PC-3 (cell line): ENCODE measurements at regions of chr9 and their contacts with region 1.

Region 1: DNA sequence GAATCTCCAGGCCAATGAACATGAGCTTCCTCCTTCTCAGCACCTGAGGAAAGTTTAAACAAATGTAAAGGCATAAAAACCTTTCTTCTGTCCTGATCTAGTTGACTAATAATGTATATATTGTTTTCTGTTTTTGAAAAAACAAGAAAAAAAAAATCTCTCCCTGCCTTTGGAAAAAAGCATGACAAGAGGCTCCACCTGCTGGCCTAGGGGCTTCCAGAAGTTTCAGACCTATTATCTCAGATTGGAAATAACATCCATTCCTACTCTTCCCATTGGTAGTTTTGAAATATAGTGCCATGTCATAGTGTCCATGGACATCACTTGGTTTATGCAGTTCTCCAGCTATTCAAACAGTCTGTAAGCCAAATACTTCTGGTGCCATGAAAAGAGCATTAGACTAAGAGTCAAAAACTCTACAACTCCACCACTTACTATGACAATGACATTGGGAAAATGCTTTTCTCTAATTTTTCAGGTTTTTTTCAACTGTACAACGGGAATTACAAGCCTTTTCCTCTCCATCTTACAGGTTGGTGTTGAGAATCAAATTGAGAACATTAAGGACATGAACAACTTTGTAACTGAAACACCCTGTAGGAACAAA is 409.6 kb upstream of the MPDZ start:
- DNase-seq: peak; percentile 32
- ATAC-seq: no peak
- H3K4me3 ChIP-seq: no peak overlapping the region
- H3K27ac ChIP-seq: peak overlapping the region; percentile 76
- H3K4me1 ChIP-seq: peaks cover 32% of the 10 kb centered on the region
- H3K27me3 ChIP-seq: no peaks in the 10 kb centered on the region
- CTCF ChIP-seq: peak; percentile 65

Region 2: GRCh38 chr9:13446938-13447842 is 241.9 kb before region 1 on chr9:
- CTCF ChIA-PET with region 1: interaction called, 3 read pairs
- POLR2A ChIA-PET with region 1: no interaction called
- intact Hi-C with region 1: loop called (anchors 5 kb)
- DNase-seq: no peak
- ATAC-seq: no peak
- H3K4me3 ChIP-seq: no peak overlapping the region
- H3K27ac ChIP-seq: no peak overlapping the region
- H3K4me1 ChIP-seq: no peaks in the 10 kb centered on the region
- H3K27me3 ChIP-seq: no peaks in the 10 kb centered on the region
- CTCF ChIP-seq: no peak; the same call in 1 of the 2 replicates

Region 3: GRCh38 chr9:13878241-13878711 is 189.2 kb after region 1 on chr9:
- CTCF ChIA-PET with region 1: no interaction called
- POLR2A ChIA-PET with region 1: no interaction called
- intact Hi-C with region 1: no loop called
- DNase-seq: no peak
- ATAC-seq: no peak
- H3K4me3 ChIP-seq: no peak overlapping the region
- H3K27ac ChIP-seq: no peak overlapping the region
- H3K4me1 ChIP-seq: peaks cover 5% of the 10 kb centered on the region; the same call in 1 of the 2 replicates
- H3K27me3 ChIP-seq: no peaks in the 10 kb centered on the region
- CTCF ChIP-seq: no peak

Region 4: DNA sequence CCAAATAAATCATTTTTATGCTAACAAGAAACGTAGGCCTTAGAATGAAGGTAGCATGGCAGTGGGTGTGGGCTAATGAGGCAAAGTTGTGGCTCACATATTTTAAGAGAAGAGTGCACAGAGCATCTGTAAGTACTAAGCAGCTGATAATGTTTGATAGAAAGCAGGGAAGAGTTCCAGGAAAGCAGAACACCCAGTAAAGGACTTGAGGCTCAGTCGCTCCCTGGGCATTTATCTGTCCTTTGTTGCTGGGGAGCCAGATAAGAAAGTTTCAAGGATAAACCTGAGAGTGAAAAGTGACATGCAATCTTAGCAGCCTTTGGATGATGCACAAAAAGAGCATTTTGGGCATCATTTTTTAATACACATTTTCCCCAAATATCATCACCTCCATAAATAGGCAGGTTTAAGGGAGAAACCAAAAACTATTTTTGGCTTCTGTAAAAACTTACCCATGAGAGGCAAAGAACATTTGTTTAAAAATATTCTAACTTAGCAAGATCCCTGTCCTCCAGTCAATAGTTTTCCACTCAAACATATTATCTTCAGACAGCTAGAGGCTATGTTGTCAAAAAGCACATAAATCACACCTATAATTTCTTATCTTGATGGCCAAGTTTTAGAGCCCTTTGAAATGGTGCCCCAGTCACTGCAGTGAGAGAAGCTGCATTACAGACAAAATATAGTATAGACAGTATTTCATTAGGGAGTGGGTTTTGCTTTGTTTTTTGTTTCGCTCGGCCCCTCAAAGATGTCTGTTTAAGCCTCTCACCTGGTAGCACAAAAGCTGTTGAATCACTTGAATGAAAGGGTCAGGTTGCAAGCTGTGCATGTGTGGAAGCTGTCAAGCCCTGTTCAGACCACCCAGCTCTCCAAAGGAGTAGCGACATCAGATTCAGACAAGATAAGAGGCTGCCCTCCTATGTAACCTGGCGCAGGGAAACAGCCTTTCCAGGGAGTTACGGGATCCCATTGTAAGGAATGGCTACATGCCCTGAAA is 1217.8 kb after region 1 on chr9:
- CTCF ChIA-PET with region 1: no interaction called
- POLR2A ChIA-PET with region 1: no interaction called
- intact Hi-C with region 1: no loop called
- DNase-seq: no peak
- ATAC-seq: no peak
- H3K4me3 ChIP-seq: no peak overlapping the region
- H3K27ac ChIP-seq: no peak overlapping the region
- H3K4me1 ChIP-seq: peaks cover 37% of the 10 kb centered on the region
- H3K27me3 ChIP-seq: no peaks in the 10 kb centered on the region
- CTCF ChIP-seq: no peak